Ovary (tissue), 10 donors: ENCODE measurements at regions of chr14 and their contacts with region 1.

Region 1: GRCh38 chr14:55411426-55412389 is at the start of gene ATG14:
- DNase-seq: peak; percentile 85 to 91 (median 89)
- H3K4me3 ChIP-seq: peak within 1 kb of the TSS; percentile 93
- H3K27ac ChIP-seq: peak within 1 kb of the TSS; percentile 71 to 88
- H3K4me1 ChIP-seq: peaks cover 2% of the 10 kb centered on the region
- H3K27me3 ChIP-seq: no peaks in the 10 kb centered on the region
- CTCF ChIP-seq: no peak
- EP300 ChIP-seq: no peak
- POLR2A ChIP-seq: peak; percentile 19
- total RNA-seq, gene ATG14: 9.5 to 15.6 (median 12.1) TPM

Region 2: DNA sequence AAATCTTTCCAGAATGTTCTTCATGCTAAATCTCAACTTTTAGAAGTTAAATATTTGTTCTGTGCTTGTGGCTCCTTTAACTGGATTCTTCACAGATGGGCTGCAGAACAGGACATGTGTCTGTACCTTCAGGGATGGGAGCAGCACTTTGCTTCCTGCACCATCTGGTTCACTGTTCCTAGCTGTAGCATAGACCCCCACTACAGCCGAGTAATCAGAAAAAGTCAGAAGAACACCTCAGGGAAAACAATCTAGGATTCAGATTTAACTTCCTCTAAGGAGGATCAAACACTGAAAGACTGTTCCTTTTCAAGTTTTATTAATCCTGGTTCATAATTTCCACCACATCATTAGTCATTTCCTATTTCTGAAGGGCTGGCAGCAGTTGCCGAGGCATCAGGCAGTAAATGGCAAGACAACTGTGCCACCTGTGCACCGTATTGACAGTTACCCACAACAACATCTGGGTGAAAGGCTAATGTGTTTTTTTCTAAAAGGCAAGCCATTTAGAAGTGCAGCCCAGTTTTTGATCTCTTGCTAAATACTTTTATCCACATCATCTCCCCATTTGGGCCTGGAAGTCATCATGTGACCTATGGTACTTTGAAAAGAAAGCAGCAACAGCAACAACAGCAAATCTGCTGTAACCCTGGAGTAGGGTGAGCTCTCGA is 1242.3 kb before region 1 on chr14:
- intact Hi-C with region 1: loop called in 1 of 4 experiments (anchors 5 kb)
- DNase-seq: no peak
- H3K4me3 ChIP-seq: no peak overlapping the region
- H3K27ac ChIP-seq: no peak overlapping the region
- H3K4me1 ChIP-seq: no peaks in the 10 kb centered on the region
- H3K27me3 ChIP-seq: no peaks in the 10 kb centered on the region
- CTCF ChIP-seq: no peak
- EP300 ChIP-seq: no peak
- POLR2A ChIP-seq: no peak

Region 3: GRCh38 chr14:55454264-55455002 is 42.7 kb after region 1 on chr14:
- intact Hi-C with region 1: no loop called
- DNase-seq: peak; percentile 66 to 74 (median 73)
- H3K4me3 ChIP-seq: no peak overlapping the region
- H3K27ac ChIP-seq: peak overlapping the region in 1 of 2 donors; percentile 38
- H3K4me1 ChIP-seq: peaks cover 7% of the 10 kb centered on the region
- H3K27me3 ChIP-seq: no peaks in the 10 kb centered on the region
- CTCF ChIP-seq: no peak
- EP300 ChIP-seq: no peak
- POLR2A ChIP-seq: no peak